ENCODE measurements at regions of chr10 and their contacts with region 1.

Region 1: DNA sequence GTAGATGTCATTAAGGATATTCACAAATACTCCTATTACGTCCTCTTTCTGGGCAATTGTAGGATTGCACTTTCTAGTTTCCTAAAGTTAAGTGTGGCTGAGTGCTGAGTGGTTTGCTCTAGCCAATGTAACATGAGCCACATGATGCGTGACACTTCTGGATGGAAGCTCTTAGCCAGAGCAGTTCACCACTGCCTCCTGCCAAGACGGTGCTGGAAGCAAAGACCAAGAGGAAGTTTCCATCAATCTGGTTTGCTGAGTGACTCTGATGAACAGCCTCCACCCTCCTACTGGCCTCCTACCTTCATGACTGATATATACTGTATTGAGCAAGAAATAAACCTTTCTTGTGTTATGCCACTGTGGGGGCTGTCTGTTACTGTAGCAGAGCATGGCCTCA is 318.1 kb downstream of the KCNMA1 start:
- DNase-seq: peak; percentile 57
- H3K4me3 ChIP-seq: no peak overlapping the region
- CTCF ChIP-seq: no peak

Region 2: DNA sequence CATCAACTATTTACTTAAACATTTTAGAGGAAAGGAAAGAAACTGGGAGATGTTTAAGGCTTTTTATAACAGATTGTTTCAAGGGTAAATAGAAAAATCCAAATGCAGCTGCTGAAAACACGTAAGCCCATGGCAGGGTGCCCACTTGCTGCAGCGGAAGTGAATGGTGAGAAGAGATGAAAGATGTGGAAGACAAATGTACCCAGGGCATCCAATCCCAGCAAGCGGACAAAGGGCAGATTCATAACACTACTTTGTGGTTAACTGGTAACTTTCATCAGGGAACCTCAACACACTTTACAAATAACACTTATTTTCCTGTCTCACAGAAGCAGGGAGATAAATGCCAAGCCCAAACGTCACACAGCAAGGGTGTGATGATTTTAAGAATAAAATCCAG is 40.4 kb before region 1 on chr10:
- in situ Hi-C with region 1: no loop called
- DNase-seq: peak; percentile 55
- H3K4me3 ChIP-seq: no peak overlapping the region
- CTCF ChIP-seq: no peak

Region 3: DNA sequence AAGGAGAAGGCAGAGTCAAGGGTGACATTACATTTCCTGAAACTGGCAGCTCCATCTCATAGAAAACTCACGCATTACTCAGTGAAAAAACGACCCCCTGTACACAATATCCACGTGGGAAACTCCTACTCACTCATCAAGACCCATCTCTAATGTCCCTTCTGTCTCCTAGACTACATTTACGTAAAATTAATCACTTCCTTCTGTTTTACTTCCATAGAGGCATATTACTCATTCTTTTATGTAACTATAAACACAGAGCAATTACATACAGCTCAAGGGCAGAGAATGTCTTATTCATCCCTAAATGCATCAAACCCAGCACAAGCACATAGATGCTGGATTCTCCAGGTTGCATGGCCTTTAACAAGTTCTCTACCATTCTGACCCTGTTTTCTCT is 36.3 kb after region 1 on chr10:
- in situ Hi-C with region 1: loop called (anchors 5 kb)
- DNase-seq: peak; percentile 89
- H3K4me3 ChIP-seq: no peak overlapping the region
- CTCF ChIP-seq: no peak